Mammary epithelial cell (primary cell): ENCODE measurements at regions of chr5 and their contacts with region 1.

Region 1: GRCh38 chr5:59126708-59127573 is 544.1 kb downstream of the RAB3C start:
- DNase-seq: peak; percentile 8
- H3K4me3 ChIP-seq: no peak overlapping the region
- H3K27ac ChIP-seq: peak overlapping the region; percentile 57
- H3K4me1 ChIP-seq: peaks cover 6% of the 10 kb centered on the region
- H3K27me3 ChIP-seq: no peaks in the 10 kb centered on the region
- CTCF ChIP-seq: no peak

Region 2: GRCh38 chr5:59034498-59035186 is 92.3 kb before region 1 on chr5:
- CTCF ChIA-PET with region 1: no interaction called
- dilution Hi-C with region 1: no loop called
- in situ Hi-C with region 1: no loop called
- intact Hi-C with region 1: no loop called
- DNase-seq: no peak
- H3K4me3 ChIP-seq: no peak overlapping the region
- H3K27ac ChIP-seq: no peak overlapping the region
- H3K4me1 ChIP-seq: peaks cover 19% of the 10 kb centered on the region
- H3K27me3 ChIP-seq: no peaks in the 10 kb centered on the region
- CTCF ChIP-seq: peak; percentile 71 to 77

Region 3: GRCh38 chr5:59062986-59063683 is 63.8 kb before region 1 on chr5:
- CTCF ChIA-PET with region 1: interaction called, 16 read pairs
- dilution Hi-C with region 1: loop called (anchors 5 kb)
- in situ Hi-C with region 1: no loop called
- intact Hi-C with region 1: no loop called
- DNase-seq: peak; percentile 54
- H3K4me3 ChIP-seq: no peak overlapping the region
- H3K27ac ChIP-seq: no peak overlapping the region
- H3K4me1 ChIP-seq: peaks cover 6% of the 10 kb centered on the region
- H3K27me3 ChIP-seq: no peaks in the 10 kb centered on the region
- CTCF ChIP-seq: no peak

Region 4: GRCh38 chr5:59079622-59080620 is 47.0 kb before region 1 on chr5:
- CTCF ChIA-PET with region 1: no interaction called
- dilution Hi-C with region 1: no loop called
- in situ Hi-C with region 1: no loop called
- intact Hi-C with region 1: no loop called
- DNase-seq: peak; percentile 97
- H3K4me3 ChIP-seq: no peak overlapping the region
- H3K27ac ChIP-seq: no peak overlapping the region
- H3K4me1 ChIP-seq: peaks cover 11% of the 10 kb centered on the region
- H3K27me3 ChIP-seq: peaks cover 2% of the 10 kb centered on the region
- CTCF ChIP-seq: no peak

Region 5: DNA sequence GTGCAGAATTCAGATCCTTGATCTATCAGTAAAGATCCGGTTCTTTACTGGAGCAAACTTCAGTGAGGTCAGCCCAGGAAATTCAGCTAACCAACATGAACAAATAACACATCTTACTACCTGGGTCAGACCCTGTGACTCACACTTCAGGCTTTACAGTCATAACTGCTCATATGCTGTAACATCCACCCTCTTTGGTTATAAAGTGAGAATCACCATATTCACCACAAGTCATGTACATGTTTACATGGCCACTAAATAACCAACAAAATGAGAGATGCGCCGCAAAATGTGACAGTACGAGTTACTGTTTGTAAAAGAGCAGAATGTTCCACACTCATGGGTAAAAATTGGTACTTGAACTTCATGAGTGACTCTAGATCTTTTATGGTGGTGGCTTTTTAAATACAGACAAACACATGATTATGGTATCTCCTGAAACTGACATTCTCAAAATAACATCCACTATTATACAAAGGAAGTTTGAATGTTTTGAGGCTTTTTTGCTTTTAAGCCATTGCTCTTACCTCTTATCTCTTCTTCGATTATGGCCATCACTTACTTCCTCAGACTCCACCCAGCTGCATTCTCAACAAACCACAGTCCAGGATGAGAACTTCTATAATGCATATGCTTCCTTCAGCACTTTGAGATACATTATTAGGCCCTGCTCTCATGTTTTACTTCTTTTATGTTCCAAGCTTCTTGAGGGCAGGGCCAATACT is 27.5 kb before region 1 on chr5:
- CTCF ChIA-PET with region 1: no interaction called
- dilution Hi-C with region 1: no loop called
- in situ Hi-C with region 1: no loop called
- intact Hi-C with region 1: loop called (anchors 2 kb)
- DNase-seq: peak; percentile 89
- H3K4me3 ChIP-seq: no peak overlapping the region
- H3K27ac ChIP-seq: peak overlapping the region; percentile 21
- H3K4me1 ChIP-seq: peaks cover 14% of the 10 kb centered on the region
- H3K27me3 ChIP-seq: no peaks in the 10 kb centered on the region
- CTCF ChIP-seq: no peak

Region 6: GRCh38 chr5:59158165-59158564 is 31.2 kb after region 1 on chr5:
- CTCF ChIA-PET with region 1: no interaction called
- dilution Hi-C with region 1: no loop called
- in situ Hi-C with region 1: no loop called
- intact Hi-C with region 1: no loop called
- DNase-seq: peak; percentile 75
- H3K4me3 ChIP-seq: no peak overlapping the region
- H3K27ac ChIP-seq: no peak overlapping the region
- H3K4me1 ChIP-seq: no peaks in the 10 kb centered on the region
- H3K27me3 ChIP-seq: no peaks in the 10 kb centered on the region
- CTCF ChIP-seq: no peak